ENCODE measurements at regions of chr2 and their contacts with region 1.

Region 1: GRCh38 chr2:98577313-98577712 is 31.0 kb downstream of the COA5 start:
- DNase-seq: no peak
- H3K4me3 ChIP-seq: no peak overlapping the region
- H3K4me3 Mint-ChIP-seq: no peak overlapping the region
- H3K27ac Mint-ChIP-seq: no peak overlapping the region
- H3K4me1 ChIP-seq: no peaks in the 10 kb centered on the region
- H3K4me1 Mint-ChIP-seq: no peaks in the 10 kb centered on the region
- H3K27me3 ChIP-seq: no peaks in the 10 kb centered on the region
- H3K27me3 Mint-ChIP-seq: no peaks in the 10 kb centered on the region
- CTCF ChIP-seq: peak in 1 of 2 experiments; percentile 31

Region 2: GRCh38 chr2:98216616-98217015 is 360.7 kb before region 1 on chr2:
- CTCF ChIA-PET with region 1: no interaction called
- POLR2A ChIA-PET with region 1: no interaction called
- intact Hi-C with region 1: loop called (anchors 5 kb)
- DNase-seq: no peak
- H3K4me3 ChIP-seq: no peak overlapping the region
- H3K4me3 Mint-ChIP-seq: no peak overlapping the region
- H3K27ac Mint-ChIP-seq: no peak overlapping the region
- H3K4me1 ChIP-seq: no peaks in the 10 kb centered on the region
- H3K4me1 Mint-ChIP-seq: peaks cover 6% of the 10 kb centered on the region
- H3K27me3 ChIP-seq: 0 out of 2 replicates have a peak, but pooled peaks cover 1% of the 10 kb centered on the region
- H3K27me3 Mint-ChIP-seq: peaks cover 22% of the 10 kb centered on the region
- CTCF ChIP-seq: no peak

Region 3: GRCh38 chr2:98560256-98560771 is 17.0 kb before region 1 on chr2:
- CTCF ChIA-PET with region 1: no interaction called
- POLR2A ChIA-PET with region 1: no interaction called
- intact Hi-C with region 1: no loop called
- DNase-seq: no peak
- H3K4me3 ChIP-seq: no peak overlapping the region
- H3K4me3 Mint-ChIP-seq: no peak overlapping the region
- H3K27ac Mint-ChIP-seq: no peak overlapping the region
- H3K4me1 ChIP-seq: no peaks in the 10 kb centered on the region
- H3K4me1 Mint-ChIP-seq: no peaks in the 10 kb centered on the region
- H3K27me3 ChIP-seq: no peaks in the 10 kb centered on the region
- H3K27me3 Mint-ChIP-seq: no peaks in the 10 kb centered on the region
- CTCF ChIP-seq: no peak

Region 4: GRCh38 chr2:98805412-98806171 is 228.3 kb after region 1 on chr2:
- CTCF ChIA-PET with region 1: no interaction called
- POLR2A ChIA-PET with region 1: no interaction called
- intact Hi-C with region 1: no loop called
- DNase-seq: no peak
- H3K4me3 ChIP-seq: no peak overlapping the region
- H3K4me3 Mint-ChIP-seq: no peak overlapping the region
- H3K27ac Mint-ChIP-seq: no peak overlapping the region
- H3K4me1 ChIP-seq: peaks cover 22% of the 10 kb centered on the region
- H3K4me1 Mint-ChIP-seq: peaks cover 27% of the 10 kb centered on the region
- H3K27me3 ChIP-seq: no peaks in the 10 kb centered on the region
- H3K27me3 Mint-ChIP-seq: no peaks in the 10 kb centered on the region
- CTCF ChIP-seq: no peak

Region 5: GRCh38 chr2:99572373-99573164 is 995.3 kb after region 1 on chr2:
- CTCF ChIA-PET with region 1: no interaction called
- POLR2A ChIA-PET with region 1: no interaction called
- intact Hi-C with region 1: no loop called
- DNase-seq: no peak
- H3K4me3 ChIP-seq: no peak overlapping the region
- H3K4me3 Mint-ChIP-seq: no peak overlapping the region
- H3K27ac Mint-ChIP-seq: no peak overlapping the region
- H3K4me1 ChIP-seq: no peaks in the 10 kb centered on the region
- H3K4me1 Mint-ChIP-seq: no peaks in the 10 kb centered on the region
- H3K27me3 ChIP-seq: no peaks in the 10 kb centered on the region
- H3K27me3 Mint-ChIP-seq: peaks cover 14% of the 10 kb centered on the region
- CTCF ChIP-seq: no peak

Measured in Caco-2 (cell line).